ENCODE measurements at regions of chr11 and their contacts with region 1.

Region 1: GRCh38 chr11:28107748-28108618 is at the starts of genes KIF18A and METTL15:
- DNase-seq: peak; percentile 99 to 100
- H3K4me3 ChIP-seq: peak within 1 kb of the TSS; percentile 49 to 52
- H3K27ac ChIP-seq: peak within 1 kb of the TSS; percentile 76
- H3K4me1 ChIP-seq: peaks cover 34% of the 10 kb centered on the region
- H3K27me3 ChIP-seq: no peaks in the 10 kb centered on the region
- CTCF ChIP-seq: no peak
- POLR2A ChIP-seq: peak in 1 of 2 donors; percentile 43
- total RNA-seq, gene KIF18A: 2.5 TPM
- total RNA-seq, gene METTL15: 14.7 TPM

Region 2: GRCh38 chr11:27514558-27514957 is 593.4 kb before region 1 on chr11:
- intact Hi-C with region 1: loop called (anchors 10 kb)
- DNase-seq: no peak
- H3K4me3 ChIP-seq: no peak overlapping the region
- H3K27ac ChIP-seq: no peak overlapping the region
- H3K4me1 ChIP-seq: no peaks in the 10 kb centered on the region
- H3K27me3 ChIP-seq: no peaks in the 10 kb centered on the region
- CTCF ChIP-seq: no peak
- POLR2A ChIP-seq: no peak

Measured in vagina (tissue), 2 donors.